ENCODE measurements at regions of chr19 and their contacts with region 1.

Region 1: DNA sequence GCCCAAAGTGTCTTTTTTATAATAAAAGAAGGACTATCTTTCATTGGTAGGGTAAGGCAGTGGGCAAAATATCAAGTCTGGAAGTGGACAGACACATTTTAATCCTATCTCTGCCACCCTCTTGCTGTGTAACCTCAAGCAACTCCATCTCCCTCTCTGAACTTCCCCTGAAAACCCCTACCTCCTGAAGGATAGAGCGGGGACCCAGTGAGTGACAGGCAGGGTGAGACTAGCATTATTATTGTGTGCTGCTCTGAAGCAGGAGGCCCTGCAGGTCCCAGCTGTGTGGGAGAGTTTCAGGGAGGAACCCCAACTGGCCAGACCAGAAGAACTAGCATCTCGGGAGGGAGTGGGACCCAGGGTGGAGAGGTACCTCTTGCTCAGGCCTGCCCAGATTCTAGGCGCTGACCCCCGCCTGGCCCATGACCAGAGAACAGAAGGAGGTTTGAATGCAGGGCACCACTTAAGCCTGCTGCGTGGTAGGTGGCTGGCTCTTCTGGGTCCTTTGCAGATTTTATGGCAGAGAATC is 5.6 kb upstream of the LYPD3 start:
- DNase-seq: no peak
- ATAC-seq: no peak
- H3K4me3 ChIP-seq: no peak overlapping the region
- H3K4me3 Mint-ChIP-seq: peak overlapping the region in 1 of 3 donors; percentile 58
- H3K27ac ChIP-seq: peak overlapping the region; percentile 34
- H3K27ac Mint-ChIP-seq: peak overlapping the region; percentile 92 to 94
- H3K4me1 ChIP-seq: peaks cover 39 to 73% of the 10 kb centered on the region in 2 experiments
- H3K4me1 Mint-ChIP-seq: peaks cover 60 to 85% (median 71%) of the 10 kb centered on the region in 3 donors
- H3K27me3 ChIP-seq: no peaks in the 10 kb centered on the region
- H3K27me3 Mint-ChIP-seq: no peaks in the 10 kb centered on the region

Region 2: DNA sequence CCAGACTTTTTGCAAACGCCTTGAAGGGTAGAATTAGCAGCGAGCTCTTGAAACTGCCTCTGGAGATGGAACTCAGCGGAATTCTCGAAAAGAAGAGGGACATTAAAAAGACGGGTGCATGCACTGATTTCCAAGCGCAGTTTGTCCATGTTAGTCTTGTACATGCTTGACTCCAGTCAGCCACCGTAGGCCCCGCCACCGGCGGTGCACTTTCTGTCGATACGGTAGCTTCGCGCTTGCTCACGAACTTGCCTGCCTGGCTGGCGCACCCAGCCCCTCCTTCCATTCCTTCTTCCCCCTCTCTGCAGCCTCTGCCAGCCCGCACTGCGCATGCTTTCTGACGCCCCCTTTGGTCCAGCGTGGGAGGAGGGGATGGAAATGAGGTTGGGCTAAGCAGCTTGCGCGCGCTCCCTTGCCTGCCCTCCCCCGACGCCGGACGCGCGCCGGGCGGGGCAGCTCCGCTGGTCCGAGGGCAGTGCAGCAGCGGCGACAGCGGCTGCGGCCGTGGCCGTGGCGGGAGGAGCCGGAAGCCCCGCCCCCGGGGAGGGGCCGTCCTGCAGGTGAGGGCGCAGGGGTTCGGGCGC is 62.0 kb after region 1 on chr19 and contains the start of gene ZNF575:
- CTCF ChIA-PET with region 1: no interaction called
- POLR2A ChIA-PET with region 1: interaction called in 1 of 2 experiments, 15 read pairs
- DNase-seq: peak; percentile 67 to 89 (median 79)
- ATAC-seq: peak; percentile 64 to 76 (median 71)
- H3K4me3 ChIP-seq: peak within 1 kb of the TSS; percentile 69 to 82
- H3K4me3 Mint-ChIP-seq: peak within 1 kb of the TSS; percentile 88 to 90 (median 88)
- H3K27ac ChIP-seq: peak within 1 kb of the TSS; percentile 71
- H3K27ac Mint-ChIP-seq: peak within 1 kb of the TSS; percentile 93 to 94
- H3K4me1 ChIP-seq: peaks cover 2 to 23% of the 10 kb centered on the region in 2 experiments
- H3K4me1 Mint-ChIP-seq: peaks cover 13 to 23% (median 21%) of the 10 kb centered on the region in 3 donors
- H3K27me3 ChIP-seq: no peaks in the 10 kb centered on the region
- H3K27me3 Mint-ChIP-seq: no peaks in the 10 kb centered on the region
- total RNA-seq, gene ZNF575: 3.4 to 12.7 (median 6.2) TPM

Region 3: DNA sequence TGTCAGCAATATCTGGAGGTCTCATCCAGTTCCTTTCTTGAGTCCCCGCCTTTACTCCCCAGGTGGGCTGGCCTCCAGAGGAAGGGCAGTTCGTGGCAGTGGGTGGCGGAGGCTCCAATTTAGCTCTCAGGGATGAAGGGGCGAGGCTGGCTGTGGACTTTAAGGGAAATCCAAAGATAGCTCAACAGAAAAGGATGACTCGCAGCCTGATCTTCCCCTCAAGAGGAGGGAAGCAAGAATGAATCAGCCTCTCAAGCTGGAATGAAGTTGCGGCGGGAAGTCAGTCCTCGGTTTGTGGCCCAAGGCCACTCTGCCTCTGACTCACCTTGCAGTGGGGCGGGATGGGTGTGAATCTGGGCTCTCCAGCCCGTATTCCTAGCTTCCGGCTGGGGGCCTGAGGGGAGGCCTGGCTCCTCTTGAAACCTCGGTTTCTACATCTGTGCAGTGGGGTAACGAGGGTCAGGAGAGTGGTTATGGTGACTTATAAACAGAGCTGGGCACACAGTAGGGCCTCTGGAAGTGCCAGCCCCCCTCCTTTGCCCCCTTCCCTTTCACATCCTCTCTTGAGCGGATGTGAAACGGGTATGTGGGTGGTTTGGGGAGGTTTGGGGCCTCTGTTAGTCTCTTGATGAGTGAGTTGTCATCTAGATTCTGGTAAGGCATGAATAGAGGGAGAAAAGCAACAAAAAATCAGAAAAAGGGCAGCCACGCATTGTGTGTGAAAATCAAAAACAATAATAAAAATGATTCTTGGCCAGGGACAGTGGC is 294.3 kb after region 1 on chr19:
- CTCF ChIA-PET with region 1: no interaction called
- POLR2A ChIA-PET with region 1: no interaction called
- DNase-seq: peak in 31 of 35 experiments; percentile 28 to 72 (median 45)
- ATAC-seq: peak; percentile 80 to 92 (median 85)
- H3K4me3 ChIP-seq: no peak overlapping the region
- H3K4me3 Mint-ChIP-seq: peak overlapping the region; percentile 19 to 57 (median 29)
- H3K27ac ChIP-seq: peak overlapping the region; percentile 83
- H3K27ac Mint-ChIP-seq: peak overlapping the region; percentile 90 to 91
- H3K4me1 ChIP-seq: peaks cover 7 to 47% of the 10 kb centered on the region in 2 experiments
- H3K4me1 Mint-ChIP-seq: peaks cover 30 to 50% (median 48%) of the 10 kb centered on the region in 3 donors
- H3K27me3 ChIP-seq: no peaks in the 10 kb centered on the region
- H3K27me3 Mint-ChIP-seq: no peaks in the 10 kb centered on the region

Measured in T-cell (primary cell).